ENCODE measurements at regions of chr10 and their contacts with region 1.

Region 1: GRCh38 chr10:5584895-5585516 is 60.2 kb downstream of the CALML3 start:
- DNase-seq: peak in 1 of 14 experiments; percentile 4
- ATAC-seq: no peak
- H3K4me3 ChIP-seq: no peak overlapping the region
- H3K4me3 Mint-ChIP-seq: no peak overlapping the region
- H3K27ac ChIP-seq: no peak overlapping the region
- H3K27ac Mint-ChIP-seq: no peak overlapping the region
- H3K4me1 ChIP-seq: peaks cover 3% of the 10 kb centered on the region
- H3K4me1 Mint-ChIP-seq: peaks cover 5% of the 10 kb centered on the region
- H3K27me3 ChIP-seq: no peaks in the 10 kb centered on the region
- H3K27me3 Mint-ChIP-seq: no peaks in the 10 kb centered on the region
- CTCF ChIP-seq: no peak

Region 2: DNA sequence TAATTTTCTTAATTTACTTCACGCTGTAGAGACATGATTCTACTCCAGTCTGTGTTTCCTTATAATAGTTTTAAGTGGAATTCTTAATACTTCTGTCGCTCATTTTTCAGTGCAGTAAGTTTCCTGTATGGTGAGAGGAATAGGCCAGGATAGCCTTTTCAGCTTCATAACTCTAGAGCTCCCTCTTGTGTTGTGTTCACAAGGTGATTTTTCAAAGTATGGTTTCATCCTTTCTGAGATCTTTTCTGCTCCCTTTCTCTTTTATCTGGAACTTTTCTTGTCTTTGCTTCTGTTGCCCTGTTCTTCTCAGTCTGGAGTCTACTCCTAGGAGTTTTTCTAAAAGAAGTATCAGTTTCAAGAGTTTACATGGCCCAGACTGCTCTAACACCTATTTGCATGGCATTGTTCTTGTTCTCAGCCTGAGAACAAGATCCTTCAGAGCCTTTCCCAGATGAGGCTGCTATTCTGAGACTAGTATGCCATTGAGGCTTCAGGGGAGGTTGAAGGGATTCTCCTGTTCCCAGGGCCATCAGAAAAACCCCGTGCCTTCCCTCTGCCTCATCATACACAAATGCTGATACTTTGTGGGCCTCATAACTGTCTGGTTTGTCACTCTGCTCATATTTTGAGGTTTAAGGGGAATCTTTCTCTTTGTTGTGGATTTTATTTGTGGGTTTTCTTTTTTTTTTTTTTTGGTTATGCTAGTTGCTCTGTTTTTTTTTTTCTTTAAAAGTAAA is 150.8 kb before region 1 on chr10:
- CTCF ChIA-PET with region 1: no interaction called
- POLR2A ChIA-PET with region 1: no interaction called
- intact Hi-C with region 1: no loop called
- DNase-seq: peak in 3 of 14 experiments; percentile 61 to 66 (median 63)
- ATAC-seq: peak; percentile 83
- H3K4me3 ChIP-seq: no peak overlapping the region
- H3K4me3 Mint-ChIP-seq: no peak overlapping the region
- H3K27ac ChIP-seq: no peak overlapping the region
- H3K27ac Mint-ChIP-seq: no peak overlapping the region
- H3K4me1 ChIP-seq: peaks cover 4% of the 10 kb centered on the region
- H3K4me1 Mint-ChIP-seq: peaks cover 15% of the 10 kb centered on the region
- H3K27me3 ChIP-seq: no peaks in the 10 kb centered on the region
- H3K27me3 Mint-ChIP-seq: no peaks in the 10 kb centered on the region
- CTCF ChIP-seq: peak; percentile 74

Region 3: DNA sequence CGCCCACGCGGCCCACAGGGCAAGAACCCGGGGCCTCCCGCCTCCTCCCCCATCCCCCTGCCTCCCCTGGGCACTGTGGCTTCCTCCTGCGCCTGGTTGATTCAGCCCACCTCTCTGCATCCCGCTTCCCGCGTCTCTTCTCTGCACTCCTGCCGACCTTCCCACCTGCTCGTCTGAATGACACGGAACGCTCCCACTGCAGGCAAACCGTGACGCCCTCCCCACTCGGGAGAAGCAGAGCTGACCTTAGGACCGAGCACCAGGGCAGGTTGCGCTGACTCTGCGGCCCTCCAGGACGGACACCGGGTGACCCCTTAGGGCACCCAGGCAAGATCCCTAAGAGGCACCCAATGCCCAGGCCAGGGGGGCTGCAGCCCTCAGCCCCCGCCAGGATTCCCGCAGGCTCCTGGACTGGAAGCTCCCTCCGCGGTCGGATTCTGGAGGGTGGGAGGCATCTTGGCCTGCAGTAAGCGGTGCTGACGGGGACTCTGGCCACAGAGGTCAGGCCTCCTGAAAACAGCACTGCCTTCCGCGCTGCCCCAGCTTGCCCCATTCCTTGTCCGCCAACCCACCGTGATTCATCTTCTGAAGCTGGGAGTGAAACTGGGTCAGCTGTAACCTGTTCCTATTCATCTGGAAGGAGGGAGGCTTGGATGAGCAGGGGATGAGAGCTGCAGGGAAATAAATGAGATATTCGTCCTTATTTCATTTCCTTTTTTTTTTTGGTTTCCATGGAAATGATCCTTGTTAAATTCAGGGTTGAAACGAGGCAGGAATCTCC is 59.3 kb before region 1 on chr10:
- CTCF ChIA-PET with region 1: no interaction called
- POLR2A ChIA-PET with region 1: no interaction called
- intact Hi-C with region 1: loop called in 1 of 2 experiments (anchors 5 kb)
- DNase-seq: peak in 1 of 14 experiments; percentile 25
- ATAC-seq: no peak
- H3K4me3 ChIP-seq: no peak overlapping the region
- H3K4me3 Mint-ChIP-seq: no peak overlapping the region
- H3K27ac ChIP-seq: no peak overlapping the region
- H3K27ac Mint-ChIP-seq: no peak overlapping the region
- H3K4me1 ChIP-seq: no peaks in the 10 kb centered on the region
- H3K4me1 Mint-ChIP-seq: no peaks in the 10 kb centered on the region
- H3K27me3 ChIP-seq: no peaks in the 10 kb centered on the region
- H3K27me3 Mint-ChIP-seq: no peaks in the 10 kb centered on the region
- CTCF ChIP-seq: no peak

Measured in CD4-positive, alpha-beta T cell (primary cell).